Panc1 (cell line): ENCODE measurements at regions of chr9 and their contacts with region 1.

Region 1: GRCh38 chr9:73114958-73115357 is 36.7 kb upstream of the ANXA1 start:
- DNase-seq: no peak
- ATAC-seq: no peak
- H3K4me3 ChIP-seq: no peak overlapping the region
- H3K27ac ChIP-seq: no peak overlapping the region
- H3K4me1 ChIP-seq: no peaks in the 10 kb centered on the region
- H3K27me3 ChIP-seq: no peaks in the 10 kb centered on the region
- CTCF ChIP-seq: no peak

Region 2: GRCh38 chr9:73011181-73011750 is 103.7 kb before region 1 on chr9:
- CTCF ChIA-PET with region 1: no interaction called
- POLR2A ChIA-PET with region 1: no interaction called
- in situ Hi-C with region 1: no loop called
- intact Hi-C with region 1: no loop called
- DNase-seq: no peak
- ATAC-seq: no peak
- H3K4me3 ChIP-seq: no peak overlapping the region
- H3K27ac ChIP-seq: no peak overlapping the region
- H3K4me1 ChIP-seq: no peaks in the 10 kb centered on the region
- H3K27me3 ChIP-seq: no peaks in the 10 kb centered on the region
- CTCF ChIP-seq: no peak

Region 3: DNA sequence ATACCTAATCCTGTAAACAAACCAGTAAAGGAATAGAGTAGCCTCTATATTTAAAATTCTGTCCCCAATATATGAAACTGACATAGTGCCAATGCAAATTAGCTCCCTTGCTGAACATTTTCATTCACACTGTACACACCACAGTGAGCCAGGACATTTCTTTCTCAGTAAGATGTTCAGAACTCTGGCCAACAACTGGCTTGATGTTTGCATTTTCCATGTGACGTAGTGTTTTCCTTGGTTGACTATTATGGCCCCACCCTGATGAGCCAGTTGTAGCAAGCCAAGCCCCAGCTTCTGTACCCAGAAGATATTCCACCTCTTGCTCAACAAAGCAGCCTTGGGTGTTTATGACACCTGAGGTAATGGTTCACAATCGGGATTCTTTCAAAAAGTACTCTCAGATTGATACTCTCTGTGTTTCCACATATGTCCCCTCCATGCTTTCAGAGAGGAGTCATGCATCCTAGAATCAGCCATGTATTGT is 19.0 kb after region 1 on chr9:
- CTCF ChIA-PET with region 1: no interaction called
- POLR2A ChIA-PET with region 1: no interaction called
- in situ Hi-C with region 1: no loop called
- intact Hi-C with region 1: no loop called
- DNase-seq: no peak
- ATAC-seq: no peak
- H3K4me3 ChIP-seq: no peak overlapping the region
- H3K27ac ChIP-seq: peak overlapping the region; percentile 44; the same call in 1 of the 2 replicates
- H3K4me1 ChIP-seq: peaks cover 22% of the 10 kb centered on the region
- H3K27me3 ChIP-seq: no peaks in the 10 kb centered on the region
- CTCF ChIP-seq: no peak

Region 4: DNA sequence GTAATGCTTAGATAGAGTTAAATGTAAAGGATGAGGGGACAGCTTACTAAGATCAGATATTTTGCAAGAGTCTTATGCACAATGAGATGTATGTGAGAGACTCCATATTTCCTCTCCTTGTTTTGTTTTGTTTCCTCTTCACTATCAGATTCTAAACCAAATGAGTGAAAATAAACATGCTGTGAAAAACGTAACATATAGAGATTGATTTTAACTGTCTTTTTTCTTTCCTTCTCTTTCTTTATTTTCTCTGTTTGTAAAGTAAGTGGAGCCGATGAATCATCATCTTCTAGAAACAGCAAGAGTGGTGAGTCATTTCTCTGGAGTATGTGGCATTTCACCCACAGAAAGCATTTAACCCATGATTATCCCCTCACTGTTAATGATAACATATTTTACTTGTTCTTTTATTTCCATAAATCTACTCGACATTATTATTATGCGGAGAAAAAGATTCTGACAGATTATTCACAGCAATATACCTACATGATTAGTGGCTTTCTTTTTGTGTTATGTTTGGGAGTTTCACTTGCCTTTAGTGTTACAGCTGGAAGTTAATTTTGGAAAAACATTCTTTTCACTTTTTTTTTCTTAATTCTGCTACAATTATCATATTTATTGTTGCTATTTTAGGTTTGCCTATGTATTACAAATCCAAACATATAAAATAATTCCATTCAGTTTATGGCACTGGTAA is 34.6 kb after region 1 on chr9:
- CTCF ChIA-PET with region 1: no interaction called
- POLR2A ChIA-PET with region 1: no interaction called
- in situ Hi-C with region 1: no loop called
- intact Hi-C with region 1: loop called (anchors 5 kb)
- DNase-seq: no peak
- ATAC-seq: peak; percentile 74
- H3K4me3 ChIP-seq: no peak overlapping the region
- H3K27ac ChIP-seq: peak overlapping the region; percentile 93
- H3K4me1 ChIP-seq: peaks cover 28% of the 10 kb centered on the region
- H3K27me3 ChIP-seq: no peaks in the 10 kb centered on the region
- CTCF ChIP-seq: no peak

Region 5: GRCh38 chr9:73167614-73168013 is 52.7 kb after region 1 on chr9:
- CTCF ChIA-PET with region 1: no interaction called
- POLR2A ChIA-PET with region 1: interaction called, 3 read pairs
- in situ Hi-C with region 1: no loop called
- intact Hi-C with region 1: loop called (anchors 5 kb)
- DNase-seq: no peak
- ATAC-seq: no peak
- H3K4me3 ChIP-seq: no peak overlapping the region
- H3K27ac ChIP-seq: no peak overlapping the region
- H3K4me1 ChIP-seq: no peaks in the 10 kb centered on the region
- H3K27me3 ChIP-seq: no peaks in the 10 kb centered on the region
- CTCF ChIP-seq: no peak